ENCODE measurements at regions of chr12 and their contacts with region 1.

Region 1: GRCh38 chr12:46268590-46269558 is at the start of gene SLC38A1:
- DNase-seq: peak; percentile 70 to 83 (median 75)
- H3K4me3 ChIP-seq: peak within 1 kb of the TSS; percentile 48 to 77 (median 50)
- H3K4me3 Mint-ChIP-seq: no peak within 1 kb of the TSS
- H3K27ac ChIP-seq: peak within 1 kb of the TSS in 1 of 2 donors; percentile 17
- H3K27ac Mint-ChIP-seq: peak within 1 kb of the TSS in 6 of 7 donors; percentile 26 to 85 (median 82)
- H3K4me1 ChIP-seq: peaks cover 35 to 37% of the 10 kb centered on the region in 2 donors
- H3K4me1 Mint-ChIP-seq: peaks cover 9% of the 10 kb centered on the region
- H3K27me3 ChIP-seq: peaks cover 11 to 57% of the 10 kb centered on the region in 2 donors
- H3K27me3 Mint-ChIP-seq: peaks cover 9 to 16% (median 12%) of the 10 kb centered on the region in 3 donors
- CTCF ChIP-seq: no peak
- polyA plus RNA-seq, gene SLC38A1: 0.92 to 1.9 (median 1.6) TPM

Region 2: DNA sequence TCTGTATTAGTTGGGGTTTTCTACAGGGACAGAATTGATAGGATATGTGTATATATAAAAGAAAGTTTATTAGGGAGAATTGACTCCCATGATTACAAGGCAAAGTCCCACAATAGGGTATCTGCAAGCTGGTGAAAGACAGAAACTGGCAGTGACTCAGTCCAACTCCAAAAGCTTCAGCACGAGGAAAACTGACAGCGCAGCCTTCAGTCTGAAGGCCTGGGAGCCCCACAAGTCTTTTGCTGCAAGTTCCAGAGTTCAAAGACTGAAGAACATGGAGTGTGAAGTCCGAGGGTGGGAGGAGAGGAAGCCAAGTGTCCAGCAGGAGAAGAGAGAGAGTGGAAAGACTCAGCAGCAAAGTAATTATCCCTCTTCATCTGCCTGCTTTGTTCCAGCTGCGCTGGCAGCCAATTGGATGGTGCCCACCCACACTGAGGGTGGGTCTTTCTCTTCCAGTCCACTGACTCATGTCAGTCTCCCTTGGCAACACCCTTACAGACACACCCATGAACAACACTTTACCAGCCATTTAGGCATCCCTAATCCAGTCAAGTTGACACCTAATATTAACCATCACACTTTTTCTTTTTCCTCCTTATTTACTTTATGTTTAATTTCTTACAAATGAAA is 167.9 kb before region 1 on chr12:
- intact Hi-C with region 1: no loop called
- DNase-seq: no peak
- H3K4me3 ChIP-seq: no peak overlapping the region
- H3K4me3 Mint-ChIP-seq: no peak overlapping the region
- H3K27ac ChIP-seq: no peak overlapping the region
- H3K27ac Mint-ChIP-seq: no peak overlapping the region
- H3K4me1 ChIP-seq: no peaks in the 10 kb centered on the region
- H3K4me1 Mint-ChIP-seq: no peaks in the 10 kb centered on the region
- H3K27me3 ChIP-seq: no peaks in the 10 kb centered on the region
- H3K27me3 Mint-ChIP-seq: peaks cover 0 to 5% (median 3%) of the 10 kb centered on the region in 3 donors
- CTCF ChIP-seq: no peak

Region 3: DNA sequence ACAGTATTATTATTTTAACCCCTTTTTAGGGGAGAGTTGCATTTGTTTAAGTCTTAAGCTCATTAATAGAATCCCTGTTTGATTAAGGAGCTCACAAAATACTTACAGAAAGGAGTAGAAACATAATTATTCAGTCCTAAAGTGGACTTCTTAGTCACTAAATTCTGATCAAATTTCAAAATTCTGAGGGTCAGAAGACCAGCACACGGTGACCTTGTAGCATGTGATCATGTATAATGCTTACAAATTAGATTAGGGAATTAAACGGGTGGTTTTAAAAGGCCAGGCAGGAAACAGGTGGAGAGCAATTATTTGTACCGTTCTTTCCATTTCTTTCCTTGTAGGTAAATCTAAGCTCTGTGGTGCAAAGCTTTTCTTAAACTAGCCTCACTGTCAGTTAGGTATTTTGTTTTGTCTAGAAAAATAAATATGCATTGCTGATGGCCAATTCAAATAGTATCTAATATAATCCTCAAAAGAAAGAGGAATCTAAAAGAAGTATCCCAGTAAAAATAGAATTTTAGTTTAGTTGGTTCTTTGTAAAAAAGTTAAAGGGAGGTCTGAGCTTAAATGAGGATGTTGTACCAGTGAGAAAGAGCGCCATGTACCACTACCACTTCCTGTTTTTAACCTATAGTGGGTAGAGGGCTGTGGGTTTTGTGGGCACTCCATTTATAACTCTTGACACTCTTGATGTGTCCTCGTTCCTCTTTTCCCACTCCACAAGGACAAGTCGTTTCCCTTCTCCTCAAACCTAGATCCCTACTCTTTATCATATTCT is 51.1 kb before region 1 on chr12:
- intact Hi-C with region 1: loop called (anchors 5 kb)
- DNase-seq: peak; percentile 76 to 91 (median 90)
- H3K4me3 ChIP-seq: peak overlapping the region in 1 of 3 experiments; percentile 27
- H3K4me3 Mint-ChIP-seq: peak overlapping the region in 1 of 2 donors; percentile 78
- H3K27ac ChIP-seq: peak overlapping the region in 1 of 2 donors; percentile 63
- H3K27ac Mint-ChIP-seq: peak overlapping the region; percentile 23 to 81 (median 56)
- H3K4me1 ChIP-seq: peaks cover 81 to 82% of the 10 kb centered on the region in 2 donors
- H3K4me1 Mint-ChIP-seq: peaks cover 78% of the 10 kb centered on the region
- H3K27me3 ChIP-seq: no peaks in the 10 kb centered on the region
- H3K27me3 Mint-ChIP-seq: peaks cover 16 to 26% (median 21%) of the 10 kb centered on the region in 3 donors
- CTCF ChIP-seq: no peak